Left cardiac atrium (tissue), 4 donors: ENCODE measurements at regions of chr3 and their contacts with region 1.

Region 1: GRCh38 chr3:138332472-138333076 is 2.9 kb upstream of the NME9 start:
- DNase-seq: no peak
- ATAC-seq: no peak

Region 2: DNA sequence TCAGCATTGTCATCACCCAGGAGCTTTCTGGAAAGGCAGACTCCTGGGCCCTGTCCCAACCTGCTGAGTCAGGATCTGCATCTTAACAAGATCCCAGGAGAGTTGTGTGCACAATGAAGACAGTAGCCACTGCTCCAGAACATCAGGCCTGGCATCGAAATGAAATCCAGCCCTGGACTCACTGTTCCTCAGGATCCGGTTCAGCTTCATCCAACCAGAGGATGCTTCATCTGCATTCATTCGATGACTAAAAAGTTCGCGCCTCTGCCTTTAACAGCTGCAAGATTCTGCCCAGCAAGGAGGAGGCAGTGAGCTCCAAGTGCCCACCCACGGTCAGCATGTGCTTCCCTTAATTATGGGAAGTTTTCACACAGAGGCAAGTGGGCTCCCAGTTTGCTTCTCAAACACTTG is 76.2 kb after region 1 on chr3:
- intact Hi-C with region 1: loop called in 1 of 2 experiments (anchors 5 kb)
- DNase-seq: no peak
- ATAC-seq: peak in 1 of 2 donors; percentile 24

Region 3: GRCh38 chr3:138417559-138417982 is 85.0 kb after region 1 on chr3:
- intact Hi-C with region 1: loop called in 1 of 2 experiments (anchors 5 kb)
- DNase-seq: peak; percentile 80
- ATAC-seq: peak; percentile 88 to 90